MCF 10A (cell line): ENCODE measurements at regions of chr4 and their contacts with region 1.

Region 1: DNA sequence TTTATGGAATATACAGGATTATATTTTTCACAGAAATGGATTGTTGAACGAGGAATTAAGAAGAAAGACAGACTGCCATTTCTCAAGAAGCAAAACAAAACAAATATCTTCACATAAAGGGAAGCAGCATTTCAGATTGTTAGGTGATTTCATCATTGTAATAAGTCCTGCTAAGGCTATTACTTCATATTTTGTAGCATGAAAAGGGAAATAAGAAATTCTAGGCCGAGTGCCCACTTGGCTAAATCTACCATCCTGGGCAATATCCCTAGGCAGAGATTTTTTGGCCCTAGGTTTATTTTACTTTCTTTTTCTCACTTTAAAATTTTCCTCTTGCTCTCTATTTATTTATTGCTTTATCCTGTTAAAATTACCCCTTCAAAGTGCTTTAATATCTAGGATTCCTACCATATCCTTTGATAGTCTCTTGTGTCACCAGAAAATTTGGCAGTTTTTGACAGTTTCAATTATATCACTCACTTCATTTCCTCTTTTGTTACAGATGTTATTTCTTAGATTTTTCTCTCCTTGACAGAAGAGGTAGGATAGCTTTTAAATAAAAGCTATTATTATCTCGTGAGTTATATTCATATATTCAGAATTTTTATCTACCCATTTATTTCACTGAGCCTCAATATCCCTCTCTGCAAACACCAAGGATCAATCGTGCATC is 142.3 kb downstream of the PDGFC start:
- DNase-seq: peak; percentile 81
- H3K4me3 Mint-ChIP-seq: peak overlapping the region; percentile 67
- H3K27ac Mint-ChIP-seq: peak overlapping the region; percentile 94
- H3K4me1 Mint-ChIP-seq: peaks cover 35% of the 10 kb centered on the region
- H3K27me3 Mint-ChIP-seq: no peaks in the 10 kb centered on the region
- CTCF ChIP-seq: no peak

Region 2: DNA sequence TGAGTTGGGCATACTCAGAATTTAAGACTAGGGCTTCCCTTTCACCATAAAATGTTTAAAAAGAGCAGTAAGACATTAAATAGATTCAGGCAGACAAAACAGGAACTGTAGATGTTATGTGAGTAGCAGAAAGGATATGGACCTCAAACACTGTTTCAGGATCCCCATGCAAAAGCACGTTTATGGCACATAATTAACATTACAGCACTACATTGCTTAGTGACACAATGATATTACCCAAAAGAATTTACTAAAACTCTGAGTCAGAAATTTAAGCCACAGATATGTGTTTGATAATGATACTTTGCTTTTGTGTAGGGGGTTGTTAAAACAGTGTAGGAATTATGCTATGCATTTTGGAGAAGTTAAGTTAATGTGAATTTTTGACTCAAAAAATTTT is 124.0 kb before region 1 on chr4:
- CTCF ChIA-PET with region 1: no interaction called
- POLR2A ChIA-PET with region 1: no interaction called
- intact Hi-C with region 1: no loop called
- DNase-seq: no peak
- H3K4me3 Mint-ChIP-seq: no peak overlapping the region
- H3K27ac Mint-ChIP-seq: no peak overlapping the region
- H3K4me1 Mint-ChIP-seq: no peaks in the 10 kb centered on the region
- H3K27me3 Mint-ChIP-seq: no peaks in the 10 kb centered on the region
- CTCF ChIP-seq: no peak

Region 3: GRCh38 chr4:156889616-156890594 is 60.6 kb after region 1 on chr4:
- CTCF ChIA-PET with region 1: no interaction called
- POLR2A ChIA-PET with region 1: no interaction called
- intact Hi-C with region 1: loop called (anchors 2 kb)
- DNase-seq: peak; percentile 71
- H3K4me3 Mint-ChIP-seq: peak overlapping the region; percentile 2
- H3K27ac Mint-ChIP-seq: peak overlapping the region; percentile 72
- H3K4me1 Mint-ChIP-seq: peaks cover 32% of the 10 kb centered on the region
- H3K27me3 Mint-ChIP-seq: no peaks in the 10 kb centered on the region
- CTCF ChIP-seq: no peak

Region 4: DNA sequence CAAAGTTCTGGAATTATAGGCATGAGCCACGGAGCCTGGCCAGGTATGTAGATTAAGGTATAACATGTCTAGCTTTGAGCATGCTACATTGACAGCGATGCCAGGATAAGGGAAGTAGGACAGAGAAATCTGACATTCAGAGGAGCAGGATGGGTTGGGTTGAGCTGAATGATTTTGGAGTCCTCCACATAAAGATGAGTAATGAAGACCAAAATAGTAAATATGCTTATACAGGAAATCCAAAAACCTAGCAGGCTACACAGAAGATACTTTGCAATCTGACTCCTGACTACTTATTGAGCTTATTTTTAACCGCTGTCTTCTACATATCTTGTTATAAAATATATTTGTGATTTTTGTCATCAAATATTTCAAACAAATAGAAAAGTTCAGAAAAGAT is 72.5 kb after region 1 on chr4:
- CTCF ChIA-PET with region 1: no interaction called
- POLR2A ChIA-PET with region 1: no interaction called
- intact Hi-C with region 1: no loop called
- DNase-seq: no peak
- H3K4me3 Mint-ChIP-seq: no peak overlapping the region
- H3K27ac Mint-ChIP-seq: no peak overlapping the region
- H3K4me1 Mint-ChIP-seq: peaks cover 34% of the 10 kb centered on the region
- H3K27me3 Mint-ChIP-seq: no peaks in the 10 kb centered on the region
- CTCF ChIP-seq: no peak

Region 5: DNA sequence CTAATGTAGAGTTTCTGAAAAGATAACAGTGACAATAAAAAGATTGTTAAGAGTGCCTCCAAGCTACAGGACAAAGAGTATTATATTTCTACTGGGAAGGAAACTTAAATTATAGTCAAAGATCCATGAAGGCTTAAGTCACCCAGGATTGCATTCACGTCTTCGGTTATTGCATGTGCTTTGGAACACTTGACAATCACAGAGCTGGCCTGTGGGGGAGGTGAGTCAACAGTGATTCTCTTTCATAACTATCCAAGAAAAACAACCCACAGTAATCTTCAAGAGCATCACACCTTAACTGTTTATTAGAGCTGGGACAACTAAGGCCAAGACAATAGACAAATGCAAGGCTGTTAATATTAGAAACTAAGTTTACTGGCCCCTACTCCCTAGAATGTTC is 101.9 kb after region 1 on chr4:
- CTCF ChIA-PET with region 1: no interaction called
- POLR2A ChIA-PET with region 1: no interaction called
- intact Hi-C with region 1: loop called (anchors 1 kb)
- DNase-seq: peak; percentile 95
- H3K4me3 Mint-ChIP-seq: no peak overlapping the region
- H3K27ac Mint-ChIP-seq: peak overlapping the region; percentile 86
- H3K4me1 Mint-ChIP-seq: peaks cover 35% of the 10 kb centered on the region
- H3K27me3 Mint-ChIP-seq: no peaks in the 10 kb centered on the region
- CTCF ChIP-seq: no peak